ENCODE measurements at regions of chrX and their contacts with region 1.

Region 1: DNA sequence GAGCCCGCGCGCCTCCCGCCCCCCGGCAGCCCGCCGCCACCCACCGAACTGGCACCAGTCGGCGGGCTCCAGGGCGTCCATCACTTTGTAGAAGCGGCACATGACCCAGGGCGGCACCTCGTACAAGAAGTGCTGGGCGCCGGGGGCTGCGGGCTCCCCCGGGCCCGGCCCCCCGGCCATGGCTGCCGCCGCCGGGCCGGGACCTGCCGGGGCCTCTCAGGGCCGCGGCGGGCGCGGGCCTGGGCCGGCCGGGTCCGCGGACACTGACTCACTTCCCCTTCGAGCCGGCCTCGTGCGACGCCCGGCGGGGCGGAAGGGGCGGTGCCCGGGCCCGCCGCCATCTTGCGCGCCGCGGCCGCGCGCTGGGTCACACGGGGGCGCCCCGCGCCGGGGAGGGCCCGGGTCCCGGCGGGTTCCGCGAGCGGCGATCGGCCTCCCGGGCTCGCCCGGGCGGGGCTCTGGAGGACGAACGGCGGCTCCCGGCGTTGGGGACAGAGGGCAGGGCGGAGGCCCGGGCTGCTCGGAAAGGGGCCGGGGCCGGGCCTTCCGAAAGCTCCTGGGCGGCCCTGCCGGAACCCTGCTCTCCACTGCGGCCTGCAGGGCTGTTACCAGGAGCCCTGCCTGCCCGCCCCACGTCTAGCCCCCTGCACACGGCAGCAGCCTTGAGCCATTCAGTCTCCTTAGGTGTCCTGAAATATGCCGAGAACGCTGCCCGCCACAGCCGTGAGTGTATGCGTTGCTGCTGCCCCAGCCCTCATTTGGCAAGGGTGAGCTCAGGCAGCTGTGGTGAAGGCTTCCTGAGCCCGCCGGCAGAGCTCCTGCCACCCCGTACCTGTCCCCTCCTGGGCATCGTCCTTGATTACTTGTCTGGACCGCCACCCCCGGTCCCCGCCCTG is at the start of gene IRAK1:
- DNase-seq: peak in 11 of 14 experiments; percentile 19 to 80 (median 60)
- ATAC-seq: peak; percentile 68
- H3K4me3 ChIP-seq: peak within 1 kb of the TSS; percentile 65
- H3K4me3 Mint-ChIP-seq: peak within 1 kb of the TSS; percentile 92
- H3K27ac ChIP-seq: peak within 1 kb of the TSS; percentile 70
- H3K27ac Mint-ChIP-seq: peak within 1 kb of the TSS; percentile 94
- H3K4me1 ChIP-seq: peaks cover 39% of the 10 kb centered on the region
- H3K4me1 Mint-ChIP-seq: peaks cover 5% of the 10 kb centered on the region
- H3K27me3 ChIP-seq: no peaks in the 10 kb centered on the region
- H3K27me3 Mint-ChIP-seq: no peaks in the 10 kb centered on the region
- CTCF ChIP-seq: no peak
- total RNA-seq, gene IRAK1: 61.2 to 67.4 TPM

Region 2: GRCh38 chrX:153703036-153703370 is 316.9 kb before region 1 on chrX:
- CTCF ChIA-PET with region 1: no interaction called
- POLR2A ChIA-PET with region 1: no interaction called
- intact Hi-C with region 1: no loop called
- DNase-seq: no peak
- ATAC-seq: no peak
- H3K4me3 ChIP-seq: no peak overlapping the region
- H3K4me3 Mint-ChIP-seq: no peak overlapping the region
- H3K27ac ChIP-seq: no peak overlapping the region
- H3K27ac Mint-ChIP-seq: no peak overlapping the region
- H3K4me1 ChIP-seq: no peaks in the 10 kb centered on the region
- H3K4me1 Mint-ChIP-seq: peaks cover 8% of the 10 kb centered on the region
- H3K27me3 ChIP-seq: no peaks in the 10 kb centered on the region
- H3K27me3 Mint-ChIP-seq: no peaks in the 10 kb centered on the region
- CTCF ChIP-seq: no peak

Region 3: GRCh38 chrX:153793291-153793690 is 226.6 kb before region 1 on chrX:
- CTCF ChIA-PET with region 1: no interaction called
- POLR2A ChIA-PET with region 1: no interaction called
- intact Hi-C with region 1: no loop called
- DNase-seq: no peak
- ATAC-seq: no peak
- H3K4me3 ChIP-seq: peak overlapping the region; percentile 89
- H3K4me3 Mint-ChIP-seq: peak overlapping the region; percentile 97
- H3K27ac ChIP-seq: peak overlapping the region; percentile 83 to 92
- H3K27ac Mint-ChIP-seq: peak overlapping the region; percentile 89
- H3K4me1 ChIP-seq: peaks cover 44% of the 10 kb centered on the region
- H3K4me1 Mint-ChIP-seq: peaks cover 14% of the 10 kb centered on the region
- H3K27me3 ChIP-seq: no peaks in the 10 kb centered on the region
- H3K27me3 Mint-ChIP-seq: no peaks in the 10 kb centered on the region
- CTCF ChIP-seq: no peak

Region 4: GRCh38 chrX:154002215-154002719 is 17.6 kb before region 1 on chrX:
- CTCF ChIA-PET with region 1: no interaction called
- POLR2A ChIA-PET with region 1: no interaction called
- intact Hi-C with region 1: no loop called
- DNase-seq: peak in 5 of 14 experiments; percentile 30 to 79 (median 66)
- ATAC-seq: peak; percentile 84
- H3K4me3 ChIP-seq: peak overlapping the region; percentile 49
- H3K4me3 Mint-ChIP-seq: peak overlapping the region; percentile 69
- H3K27ac ChIP-seq: no peak overlapping the region
- H3K27ac Mint-ChIP-seq: peak overlapping the region; percentile 63
- H3K4me1 ChIP-seq: peaks cover 16% of the 10 kb centered on the region
- H3K4me1 Mint-ChIP-seq: peaks cover 11% of the 10 kb centered on the region
- H3K27me3 ChIP-seq: no peaks in the 10 kb centered on the region
- H3K27me3 Mint-ChIP-seq: no peaks in the 10 kb centered on the region
- CTCF ChIP-seq: no peak

Region 5: DNA sequence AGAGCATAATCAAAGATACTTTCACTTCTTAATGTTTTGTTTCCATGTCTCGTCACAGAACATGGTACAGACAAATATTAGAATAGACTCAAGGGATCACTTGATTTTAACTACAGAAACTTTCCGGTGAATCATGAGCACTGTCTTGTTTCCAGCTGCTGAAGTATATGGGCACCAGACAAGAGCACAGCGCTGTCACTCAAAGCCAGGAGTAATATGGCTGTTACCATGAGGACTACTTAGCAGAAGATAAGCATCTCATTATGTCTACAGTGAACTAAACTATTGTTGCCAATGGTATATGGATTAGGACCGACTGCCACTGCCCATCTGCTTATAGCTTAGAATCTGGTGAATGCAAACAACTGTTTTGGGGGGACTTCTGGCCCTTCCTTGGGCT is 43.4 kb after region 1 on chrX:
- CTCF ChIA-PET with region 1: no interaction called
- POLR2A ChIA-PET with region 1: no interaction called
- intact Hi-C with region 1: loop called in 1 of 2 experiments (anchors 10 kb)
- DNase-seq: no peak
- ATAC-seq: peak; percentile 26
- H3K4me3 ChIP-seq: no peak overlapping the region
- H3K4me3 Mint-ChIP-seq: no peak overlapping the region
- H3K27ac ChIP-seq: no peak overlapping the region
- H3K27ac Mint-ChIP-seq: peak overlapping the region; percentile 83
- H3K4me1 ChIP-seq: peaks cover 80% of the 10 kb centered on the region
- H3K4me1 Mint-ChIP-seq: peaks cover 81% of the 10 kb centered on the region
- H3K27me3 ChIP-seq: no peaks in the 10 kb centered on the region
- H3K27me3 Mint-ChIP-seq: no peaks in the 10 kb centered on the region
- CTCF ChIP-seq: no peak

Region 6: DNA sequence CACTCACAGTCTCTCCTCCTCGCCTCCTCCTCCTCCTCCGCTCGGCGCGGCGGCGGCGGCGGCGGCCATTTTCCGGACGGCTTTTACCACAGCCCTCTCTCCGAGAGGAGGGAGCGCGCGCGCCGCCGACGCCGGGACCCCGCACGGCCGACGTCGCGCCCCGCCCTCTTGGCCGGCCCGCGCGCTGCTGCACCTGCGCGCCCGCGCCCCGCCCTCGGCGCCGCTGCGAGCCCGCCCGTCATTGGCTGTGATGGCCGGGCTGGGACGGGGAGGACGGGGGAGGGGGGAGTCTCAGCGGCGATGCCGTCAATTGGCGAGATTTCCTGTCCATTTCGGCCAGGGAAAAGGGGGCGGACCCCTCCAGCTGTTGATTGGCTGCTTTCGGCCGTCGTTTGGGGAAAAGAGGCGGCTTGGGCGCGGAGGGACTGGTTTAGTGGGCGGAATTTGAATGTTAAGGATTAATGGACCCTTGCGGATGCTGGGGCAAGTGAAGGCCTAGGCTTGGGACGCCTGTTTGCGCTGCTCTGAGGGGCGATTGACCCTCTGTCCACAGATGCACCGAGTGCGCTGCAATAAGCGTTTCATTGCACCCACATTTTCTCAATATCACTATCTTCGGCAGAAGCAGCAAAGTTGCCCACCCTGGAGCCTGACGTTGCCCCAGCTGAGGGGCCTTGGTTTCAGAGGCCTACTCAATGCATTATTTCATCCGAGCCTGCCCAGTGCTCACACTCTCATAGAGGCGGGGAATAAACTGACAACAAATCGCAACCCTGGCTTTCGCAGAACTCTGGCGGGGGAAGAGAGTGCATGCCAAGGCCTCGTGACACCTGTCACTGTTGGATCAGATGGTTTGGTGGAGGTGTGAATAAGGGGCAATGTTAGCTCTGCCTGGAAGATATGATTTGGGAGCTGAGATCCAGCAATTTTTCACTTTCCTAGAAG is 78.0 kb after region 1 on chrX and contains the start of gene MECP2:
- CTCF ChIA-PET with region 1: interaction called, 7 read pairs
- POLR2A ChIA-PET with region 1: interaction called, 3 read pairs
- intact Hi-C with region 1: loop called in 1 of 2 experiments (anchors 5 kb)
- DNase-seq: peak; percentile 69 to 94 (median 82)
- ATAC-seq: peak; percentile 86
- H3K4me3 ChIP-seq: peak within 1 kb of the TSS; percentile 90
- H3K4me3 Mint-ChIP-seq: peak within 1 kb of the TSS; percentile 97
- H3K27ac ChIP-seq: peak within 1 kb of the TSS; percentile 80 to 86
- H3K27ac Mint-ChIP-seq: peak within 1 kb of the TSS; percentile 97
- H3K4me1 ChIP-seq: peaks cover 32% of the 10 kb centered on the region
- H3K4me1 Mint-ChIP-seq: peaks cover 39% of the 10 kb centered on the region
- H3K27me3 ChIP-seq: no peaks in the 10 kb centered on the region
- H3K27me3 Mint-ChIP-seq: no peaks in the 10 kb centered on the region
- CTCF ChIP-seq: no peak
- total RNA-seq, gene MECP2: 120 to 133 TPM

Region 7: DNA sequence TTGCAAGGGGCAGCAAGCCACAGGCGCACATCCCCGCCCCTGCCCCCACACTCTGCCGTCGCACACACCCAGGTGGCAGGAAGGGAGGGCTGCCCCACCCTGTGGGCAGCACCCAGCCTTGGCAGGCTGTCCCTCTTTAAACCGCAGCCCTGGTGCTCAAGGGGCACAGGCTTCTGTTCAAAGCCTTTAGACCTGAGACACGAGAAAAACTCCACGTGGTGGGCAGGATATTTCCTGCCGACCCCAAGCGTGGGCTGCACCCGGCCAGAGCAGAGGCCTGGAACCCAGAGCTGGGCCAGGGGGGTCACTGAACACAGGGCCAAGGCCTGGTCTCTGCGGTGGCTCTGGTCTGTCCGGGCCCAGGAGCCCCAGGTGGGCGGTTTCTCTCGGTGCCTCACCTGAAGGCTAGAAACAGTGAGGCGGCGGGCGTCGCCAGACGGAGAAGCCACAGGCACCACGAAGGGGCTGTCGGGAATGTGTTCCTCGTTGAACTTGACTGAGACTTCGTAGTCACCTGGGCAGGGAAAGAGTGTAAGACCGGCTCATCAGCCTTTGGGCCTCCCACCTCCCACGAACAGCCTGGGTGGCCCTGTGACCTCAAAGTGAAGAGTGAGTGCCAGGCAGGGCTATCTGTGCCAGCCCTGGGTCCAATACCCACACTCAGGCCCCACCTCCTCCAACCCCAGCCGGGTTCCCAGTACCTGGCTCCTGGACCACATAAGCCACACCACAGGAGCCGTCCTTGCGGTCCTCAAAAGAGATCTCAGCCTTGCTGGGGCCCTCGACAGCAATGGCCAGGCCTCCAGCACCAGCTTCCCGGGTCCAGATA is 331.5 kb after region 1 on chrX:
- CTCF ChIA-PET with region 1: no interaction called
- POLR2A ChIA-PET with region 1: no interaction called
- intact Hi-C with region 1: no loop called
- DNase-seq: peak in 10 of 14 experiments; percentile 28 to 81 (median 48)
- ATAC-seq: peak; percentile 41
- H3K4me3 ChIP-seq: peak overlapping the region; percentile 3
- H3K4me3 Mint-ChIP-seq: peak overlapping the region; percentile 48
- H3K27ac ChIP-seq: peak overlapping the region; percentile 53 to 55
- H3K27ac Mint-ChIP-seq: peak overlapping the region; percentile 85
- H3K4me1 ChIP-seq: peaks cover 93% of the 10 kb centered on the region
- H3K4me1 Mint-ChIP-seq: peaks cover 27% of the 10 kb centered on the region
- H3K27me3 ChIP-seq: no peaks in the 10 kb centered on the region
- H3K27me3 Mint-ChIP-seq: no peaks in the 10 kb centered on the region
- CTCF ChIP-seq: no peak

Region 8: DNA sequence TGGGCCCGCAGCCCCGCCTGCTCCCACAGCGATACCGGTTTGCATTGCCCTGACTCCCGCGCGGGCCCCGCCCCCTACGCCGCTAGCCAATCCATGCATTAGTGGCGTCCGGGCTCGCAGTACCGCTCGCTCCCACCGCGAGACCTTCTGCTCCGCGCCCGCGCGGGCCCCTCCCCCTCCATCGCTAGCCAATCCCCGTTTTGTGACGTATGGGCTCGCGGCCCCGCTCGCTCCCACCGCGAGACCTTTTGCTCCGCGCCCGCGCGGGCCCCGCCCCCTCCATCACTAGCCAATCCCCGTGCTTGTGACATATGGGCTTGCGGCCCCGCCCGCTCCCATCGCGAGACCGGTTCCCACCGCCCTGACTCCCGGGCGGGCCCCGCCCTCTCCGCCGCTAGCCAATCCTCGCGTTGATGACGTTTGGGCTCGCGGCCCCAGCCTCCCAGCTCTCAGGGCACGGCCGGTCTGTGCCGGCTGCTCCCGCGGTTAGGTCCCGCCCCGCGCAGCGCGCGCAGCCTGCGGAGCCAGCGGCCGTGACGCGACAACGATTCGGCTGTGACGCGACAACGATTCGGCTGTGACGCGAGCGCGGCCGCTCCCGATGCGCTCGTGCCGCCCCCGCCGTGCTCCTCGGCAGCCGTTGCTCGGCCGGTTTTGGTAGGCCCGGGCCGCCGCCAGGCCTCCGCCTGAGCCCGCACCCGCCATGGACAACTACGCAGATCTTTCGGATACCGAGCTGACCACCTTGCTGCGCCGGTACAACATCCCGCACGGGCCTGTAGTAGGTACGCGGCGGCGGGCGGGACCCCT is 359.1 kb after region 1 on chrX and contains the start of gene EMD:
- CTCF ChIA-PET with region 1: no interaction called
- POLR2A ChIA-PET with region 1: interaction called, 4 read pairs
- intact Hi-C with region 1: loop called in 1 of 2 experiments (anchors 10 kb)
- DNase-seq: peak; percentile 90 to 98 (median 96)
- ATAC-seq: peak; percentile 78
- H3K4me3 ChIP-seq: peak within 1 kb of the TSS; percentile 77
- H3K4me3 Mint-ChIP-seq: peak within 1 kb of the TSS; percentile 93
- H3K27ac ChIP-seq: peak within 1 kb of the TSS; percentile 92 to 96
- H3K27ac Mint-ChIP-seq: peak within 1 kb of the TSS; percentile 94
- H3K4me1 ChIP-seq: peaks cover 47% of the 10 kb centered on the region
- H3K4me1 Mint-ChIP-seq: peaks cover 5% of the 10 kb centered on the region
- H3K27me3 ChIP-seq: no peaks in the 10 kb centered on the region
- H3K27me3 Mint-ChIP-seq: no peaks in the 10 kb centered on the region
- CTCF ChIP-seq: no peak
- total RNA-seq, gene EMD: 164 to 178 TPM